Activated B cell treated with CpG ODN at 0.5 μM for 24 hours (primary cell): ENCODE measurements at regions of chr5 and their contacts with region 1.

Region 1: DNA sequence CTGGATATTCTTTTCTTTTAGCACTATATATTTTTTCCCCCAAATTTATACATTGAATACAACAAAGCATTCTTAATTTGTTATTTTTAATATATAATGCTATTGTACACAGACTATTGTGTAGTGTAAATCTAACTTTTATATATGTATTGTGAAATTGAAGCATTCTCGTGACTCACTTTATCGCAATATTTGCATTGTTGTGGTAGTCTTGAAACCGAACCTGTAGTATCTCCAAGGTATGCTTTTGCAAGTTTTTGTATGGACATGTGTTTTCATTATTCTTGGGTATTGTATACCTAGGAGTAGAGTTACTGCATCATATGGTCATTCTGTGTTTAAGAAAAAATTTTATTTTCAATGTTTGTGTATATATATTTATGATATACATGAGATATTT is 49.6 kb downstream of the NSD1 start:
- DNase-seq: no peak
- ATAC-seq: no peak
- H3K4me3 Mint-ChIP-seq: no peak overlapping the region
- H3K27ac Mint-ChIP-seq: no peak overlapping the region
- H3K4me1 Mint-ChIP-seq: peaks cover 21% of the 10 kb centered on the region
- H3K27me3 Mint-ChIP-seq: no peaks in the 10 kb centered on the region
- CTCF ChIP-seq: no peak

Region 2: GRCh38 chr5:177071666-177072385 is 111.3 kb before region 1 on chr5:
- CTCF ChIA-PET with region 1: no interaction called
- POLR2A ChIA-PET with region 1: no interaction called
- intact Hi-C with region 1: no loop called
- DNase-seq: peak; percentile 55
- ATAC-seq: peak; percentile 89
- H3K4me3 Mint-ChIP-seq: peak overlapping the region; percentile 61
- H3K27ac Mint-ChIP-seq: peak overlapping the region; percentile 82
- H3K4me1 Mint-ChIP-seq: peaks cover 35% of the 10 kb centered on the region
- H3K27me3 Mint-ChIP-seq: no peaks in the 10 kb centered on the region
- CTCF ChIP-seq: peak; percentile 85

Region 3: GRCh38 chr5:177220576-177220975 is 37.4 kb after region 1 on chr5:
- CTCF ChIA-PET with region 1: no interaction called
- POLR2A ChIA-PET with region 1: no interaction called
- intact Hi-C with region 1: loop called (anchors 5 kb)
- DNase-seq: no peak
- ATAC-seq: no peak
- H3K4me3 Mint-ChIP-seq: no peak overlapping the region
- H3K27ac Mint-ChIP-seq: no peak overlapping the region
- H3K4me1 Mint-ChIP-seq: peaks cover 16% of the 10 kb centered on the region
- H3K27me3 Mint-ChIP-seq: no peaks in the 10 kb centered on the region
- CTCF ChIP-seq: no peak

Region 4: DNA sequence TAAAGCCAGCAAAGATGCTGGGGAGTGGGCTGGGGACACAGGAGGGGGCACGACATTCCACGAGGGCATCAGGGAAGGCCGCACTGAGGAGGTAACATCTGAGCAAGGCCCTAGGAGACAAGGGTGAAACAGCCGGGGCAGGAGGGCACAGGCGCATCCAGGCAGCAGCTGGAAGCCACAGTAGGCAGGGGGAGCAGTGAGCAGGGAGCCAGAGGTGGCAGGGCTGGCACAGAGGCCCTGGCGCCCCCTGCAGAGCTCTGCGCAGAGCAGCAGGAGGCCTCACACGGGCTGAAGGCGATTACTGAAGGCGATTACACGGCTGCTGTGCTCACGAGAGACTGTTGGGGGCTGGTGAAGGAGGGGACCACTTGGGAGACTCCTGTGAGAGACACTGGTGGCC is 153.0 kb after region 1 on chr5:
- CTCF ChIA-PET with region 1: no interaction called
- POLR2A ChIA-PET with region 1: no interaction called
- intact Hi-C with region 1: no loop called
- DNase-seq: no peak
- ATAC-seq: peak; percentile 62
- H3K4me3 Mint-ChIP-seq: no peak overlapping the region
- H3K27ac Mint-ChIP-seq: no peak overlapping the region
- H3K4me1 Mint-ChIP-seq: peaks cover 16% of the 10 kb centered on the region
- H3K27me3 Mint-ChIP-seq: no peaks in the 10 kb centered on the region
- CTCF ChIP-seq: no peak

Region 5: GRCh38 chr5:177362610-177363507 is 179.7 kb after region 1 on chr5:
- CTCF ChIA-PET with region 1: no interaction called
- POLR2A ChIA-PET with region 1: no interaction called
- intact Hi-C with region 1: no loop called
- DNase-seq: peak; percentile 60
- ATAC-seq: peak; percentile 73
- H3K4me3 Mint-ChIP-seq: peak overlapping the region; percentile 82
- H3K27ac Mint-ChIP-seq: peak overlapping the region; percentile 83
- H3K4me1 Mint-ChIP-seq: peaks cover 67% of the 10 kb centered on the region
- H3K27me3 Mint-ChIP-seq: no peaks in the 10 kb centered on the region
- CTCF ChIP-seq: no peak